ENCODE measurements at regions of chr2 and their contacts with region 1.

Region 1: DNA sequence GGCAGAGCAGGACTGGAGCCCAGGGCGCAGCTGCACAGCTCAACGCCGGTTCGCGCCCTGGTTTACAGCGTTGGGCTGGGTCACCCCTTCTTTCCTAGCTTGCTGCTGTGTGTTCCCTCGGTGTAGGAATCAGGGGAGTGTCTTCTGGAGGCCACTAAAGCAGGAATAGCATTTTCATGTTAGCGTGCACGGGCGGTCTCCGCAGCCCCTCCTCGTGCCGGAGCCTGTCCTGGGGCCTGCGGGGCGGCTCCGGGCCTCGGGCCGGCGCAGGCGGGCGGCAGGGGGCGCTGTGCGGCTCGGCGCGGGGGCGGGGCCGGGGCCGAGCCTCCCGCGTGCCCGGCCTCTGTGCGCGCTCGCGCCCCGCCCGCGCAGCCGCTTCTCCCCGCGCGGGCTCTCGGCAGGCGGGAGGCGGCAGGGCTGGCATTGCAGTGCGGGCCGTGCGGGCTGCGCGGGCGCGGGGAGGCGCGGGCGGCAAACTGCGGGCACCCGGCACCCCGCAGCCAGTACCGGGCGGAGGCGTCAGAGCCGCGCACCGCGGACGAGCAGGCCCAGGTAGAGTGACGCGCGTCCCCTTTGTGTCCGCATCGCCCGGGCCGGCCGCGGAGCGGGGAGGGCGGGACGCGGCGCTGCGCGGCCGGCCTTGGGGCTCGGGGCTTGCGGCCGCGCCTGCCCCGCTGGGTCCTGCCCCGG is at the start of gene RNF144A:
- DNase-seq: peak; percentile 66
- H3K4me3 Mint-ChIP-seq: peak within 1 kb of the TSS; percentile 86
- H3K27ac Mint-ChIP-seq: peak within 1 kb of the TSS; percentile 87
- H3K4me1 Mint-ChIP-seq: peaks cover 84% of the 10 kb centered on the region
- H3K27me3 Mint-ChIP-seq: no peaks in the 10 kb centered on the region
- total RNA-seq, gene RNF144A: 89.6 to 101 TPM

Region 2: DNA sequence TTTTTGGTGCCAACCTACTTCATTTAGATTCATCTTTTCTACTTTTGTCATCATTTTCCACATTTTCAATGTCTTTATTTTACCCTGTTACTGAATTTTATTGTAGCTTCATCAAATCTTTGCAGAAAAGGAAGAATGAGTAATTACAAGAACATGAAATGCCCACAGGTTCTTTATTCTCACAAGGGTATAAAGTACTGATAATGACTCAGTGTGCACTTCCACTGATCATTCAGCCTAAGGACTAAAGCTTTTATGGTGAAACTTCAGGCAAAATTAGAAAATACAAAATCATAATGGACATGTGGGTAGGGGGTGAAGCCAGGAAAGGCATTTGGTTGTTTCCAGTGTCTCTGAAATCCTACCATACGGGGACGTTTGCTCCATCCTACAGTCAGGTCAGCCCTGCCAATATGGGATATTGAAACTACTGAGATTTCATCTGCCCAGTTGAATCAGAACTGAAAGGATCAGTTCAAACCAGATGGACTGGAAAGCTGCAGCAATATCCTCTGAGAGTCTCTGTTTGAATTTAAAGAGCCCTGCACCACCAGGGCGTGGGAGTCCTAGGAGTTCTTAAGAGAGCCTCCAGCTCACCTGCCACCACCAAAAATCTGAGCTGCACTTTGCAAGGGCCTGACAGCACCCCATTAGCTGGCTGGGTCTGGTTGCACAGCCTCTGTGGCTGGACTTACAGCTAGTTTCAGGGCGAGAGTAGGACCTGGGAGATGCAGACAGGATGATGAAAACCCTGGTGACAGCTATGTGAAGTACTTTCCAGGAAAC is 441.9 kb before region 1 on chr2:
- CTCF ChIA-PET with region 1: no interaction called
- POLR2A ChIA-PET with region 1: no interaction called
- DNase-seq: no peak
- H3K4me3 Mint-ChIP-seq: no peak overlapping the region
- H3K27ac Mint-ChIP-seq: no peak overlapping the region
- H3K4me1 Mint-ChIP-seq: no peaks in the 10 kb centered on the region
- H3K27me3 Mint-ChIP-seq: no peaks in the 10 kb centered on the region

Region 3: GRCh38 chr2:6906165-6906741 is 11.0 kb before region 1 on chr2:
- CTCF ChIA-PET with region 1: interaction called, 20 read pairs
- POLR2A ChIA-PET with region 1: interaction called, 9 read pairs
- DNase-seq: no peak
- H3K4me3 Mint-ChIP-seq: no peak overlapping the region
- H3K27ac Mint-ChIP-seq: peak overlapping the region; percentile 60
- H3K4me1 Mint-ChIP-seq: peaks cover 70% of the 10 kb centered on the region
- H3K27me3 Mint-ChIP-seq: no peaks in the 10 kb centered on the region

Region 4: DNA sequence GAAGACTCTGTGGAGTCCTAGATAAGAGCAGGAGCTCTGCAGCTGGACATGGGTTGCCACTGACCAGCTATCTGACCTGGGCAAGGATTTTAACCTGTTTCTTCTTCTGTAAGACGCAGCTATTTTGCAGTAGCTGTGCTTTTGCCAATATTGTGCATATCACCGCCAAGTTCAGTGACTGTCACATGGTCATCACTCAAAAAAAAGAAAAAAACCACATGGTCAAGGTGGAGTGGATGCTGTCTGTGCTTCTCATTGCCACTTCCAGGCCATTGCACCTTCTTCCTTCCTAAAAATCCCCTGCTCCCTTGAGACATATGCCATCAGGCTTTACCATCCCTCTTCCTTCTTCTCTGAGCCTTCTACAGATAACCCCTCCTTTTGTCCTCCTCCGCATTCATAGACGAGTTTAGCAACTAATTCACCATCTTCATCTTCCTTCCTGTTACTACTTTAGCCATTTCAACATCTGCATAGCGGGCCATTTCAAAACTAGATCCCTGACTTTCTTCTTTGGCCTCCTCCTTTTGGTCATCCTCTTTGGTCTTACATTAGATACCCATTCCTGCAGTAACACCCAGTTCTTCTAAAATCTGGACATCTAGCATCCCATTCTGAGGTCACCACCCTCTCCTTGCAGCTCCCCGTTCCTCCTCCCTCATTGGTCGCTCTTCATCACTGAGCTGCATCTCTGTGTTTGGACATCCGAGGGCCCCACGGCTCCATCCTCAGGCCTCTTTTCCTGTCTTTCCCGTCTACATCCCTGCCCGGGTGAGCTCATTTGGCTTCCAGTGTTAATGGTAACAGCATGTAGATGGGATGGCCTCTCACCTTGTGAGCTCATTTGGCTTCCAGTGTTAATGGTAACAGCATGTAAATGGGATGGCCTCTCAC is 17.8 kb after region 1 on chr2:
- CTCF ChIA-PET with region 1: interaction called, 12 read pairs
- POLR2A ChIA-PET with region 1: no interaction called
- DNase-seq: no peak
- H3K4me3 Mint-ChIP-seq: no peak overlapping the region
- H3K27ac Mint-ChIP-seq: no peak overlapping the region
- H3K4me1 Mint-ChIP-seq: peaks cover 68% of the 10 kb centered on the region
- H3K27me3 Mint-ChIP-seq: no peaks in the 10 kb centered on the region

Measured in activated CD4-positive, alpha-beta T cell treated with anti-CD3 and anti-CD28 coated beads, Interleukin-2, amount 10 ng/mL, durations not matched to agents 7 days and 5 days (primary cell).